Upper lobe of right lung (tissue), 1 donor: ENCODE measurements at regions of chr18 and their contacts with region 1.

Region 1: GRCh38 chr18:3245853-3246634 is 1.6 kb upstream of the MYL12A start:
- DNase-seq: peak; percentile 94
- ATAC-seq: peak; percentile 86
- H3K4me3 ChIP-seq: peak overlapping the region; percentile 81
- H3K27ac ChIP-seq: peak overlapping the region; percentile 97
- H3K4me1 ChIP-seq: peaks cover 27% of the 10 kb centered on the region
- H3K27me3 ChIP-seq: no peaks in the 10 kb centered on the region
- CTCF ChIP-seq: peak; percentile 95

Region 2: DNA sequence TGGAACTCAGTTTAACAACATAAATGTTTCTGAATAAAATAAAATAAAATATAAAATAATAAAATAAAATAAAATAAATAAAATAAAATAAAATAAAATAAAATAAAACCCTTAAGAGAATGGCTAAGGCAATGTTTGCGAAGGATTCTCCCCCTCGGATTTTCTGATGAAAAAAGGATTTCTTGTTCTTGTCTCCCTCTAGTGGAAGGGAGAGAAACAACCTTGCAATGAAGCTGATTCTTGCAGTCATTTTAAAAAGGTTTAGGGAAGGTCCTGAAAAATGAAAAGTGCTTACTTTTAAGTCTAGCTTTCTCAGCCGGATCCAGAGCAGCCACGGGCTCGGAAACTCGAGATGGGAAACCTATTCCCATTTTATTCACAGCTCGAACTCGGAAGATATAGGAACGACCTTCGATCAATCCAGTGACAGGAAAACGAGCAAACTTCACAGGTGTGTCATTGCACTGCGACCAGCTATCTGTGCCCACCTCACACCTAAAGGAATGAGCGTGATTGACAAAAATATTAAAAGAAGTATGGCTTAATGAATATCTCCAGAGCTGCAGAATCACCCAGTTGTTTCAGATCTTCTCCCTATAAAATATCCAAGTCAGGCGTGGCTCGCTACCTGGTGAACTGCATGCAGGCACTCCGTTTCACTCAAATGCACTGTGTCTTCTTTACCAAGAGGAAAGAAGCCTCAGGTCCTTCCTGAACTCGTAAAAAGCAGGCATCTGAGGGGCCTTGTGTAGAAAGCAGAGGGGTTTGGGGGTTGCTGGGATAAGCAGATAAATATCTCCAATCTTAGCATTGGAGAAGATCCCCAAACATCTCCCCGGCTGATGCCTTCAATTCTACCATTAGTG is 94.4 kb before region 1 on chr18:
- intact Hi-C with region 1: loop called (anchors 10 kb)
- DNase-seq: no peak
- ATAC-seq: peak; percentile 56
- H3K4me3 ChIP-seq: no peak overlapping the region
- H3K27ac ChIP-seq: no peak overlapping the region
- H3K4me1 ChIP-seq: peaks cover 11% of the 10 kb centered on the region
- H3K27me3 ChIP-seq: no peaks in the 10 kb centered on the region
- CTCF ChIP-seq: peak; percentile 81

Region 3: DNA sequence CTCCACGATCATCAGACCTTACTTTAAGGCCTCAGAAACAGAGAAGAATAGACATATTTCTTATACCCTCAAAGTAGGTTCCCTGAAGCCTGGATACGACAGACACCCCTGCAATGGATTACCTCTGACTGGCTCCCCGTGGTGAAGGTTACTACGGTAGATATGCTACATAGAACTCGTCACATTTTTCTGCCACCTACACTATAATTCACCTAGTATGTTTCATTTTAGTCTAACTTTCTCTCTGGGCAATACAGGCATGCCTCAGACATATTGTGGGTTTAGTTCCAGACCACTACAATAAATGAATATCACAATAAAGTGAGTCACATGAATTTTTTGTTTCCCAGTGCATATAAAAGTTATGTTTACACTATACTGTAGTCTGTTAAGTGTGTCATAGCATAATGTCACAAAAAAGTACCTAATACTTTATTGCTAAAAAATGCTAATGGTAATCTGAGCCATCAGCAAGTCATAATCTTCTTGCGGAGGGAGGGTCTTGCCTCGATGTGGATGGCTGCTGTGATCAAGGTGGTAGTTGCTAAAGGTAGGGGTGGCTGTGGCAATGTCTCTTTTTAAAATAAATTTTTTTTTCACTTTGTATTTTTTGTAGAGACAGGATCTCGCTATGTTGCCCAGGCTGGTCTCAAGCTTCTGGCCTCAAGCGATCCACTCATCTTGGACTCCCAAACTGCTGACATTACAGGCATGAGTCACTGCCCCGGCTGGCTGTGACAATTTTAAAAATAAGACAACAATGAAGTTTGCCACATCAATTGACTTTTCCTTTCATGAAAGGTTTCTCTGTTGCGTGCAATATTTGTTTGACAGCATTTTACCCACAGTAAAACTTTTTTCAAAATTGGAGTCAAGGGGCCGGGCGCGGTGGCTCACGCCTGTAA is 268.5 kb after region 1 on chr18:
- intact Hi-C with region 1: no loop called
- DNase-seq: no peak
- ATAC-seq: no peak
- H3K4me3 ChIP-seq: no peak overlapping the region
- H3K27ac ChIP-seq: no peak overlapping the region
- H3K4me1 ChIP-seq: no peaks in the 10 kb centered on the region
- H3K27me3 ChIP-seq: no peaks in the 10 kb centered on the region
- CTCF ChIP-seq: no peak